Activated CD8-positive, alpha-beta T cell treated with anti-CD3 and anti-CD28 coated beads, Interleukin-2, amount 10 ng/mL, durations not matched to agents 7 days and 5 days (primary cell): ENCODE measurements at regions of chr19 and their contacts with region 1.

Region 1: DNA sequence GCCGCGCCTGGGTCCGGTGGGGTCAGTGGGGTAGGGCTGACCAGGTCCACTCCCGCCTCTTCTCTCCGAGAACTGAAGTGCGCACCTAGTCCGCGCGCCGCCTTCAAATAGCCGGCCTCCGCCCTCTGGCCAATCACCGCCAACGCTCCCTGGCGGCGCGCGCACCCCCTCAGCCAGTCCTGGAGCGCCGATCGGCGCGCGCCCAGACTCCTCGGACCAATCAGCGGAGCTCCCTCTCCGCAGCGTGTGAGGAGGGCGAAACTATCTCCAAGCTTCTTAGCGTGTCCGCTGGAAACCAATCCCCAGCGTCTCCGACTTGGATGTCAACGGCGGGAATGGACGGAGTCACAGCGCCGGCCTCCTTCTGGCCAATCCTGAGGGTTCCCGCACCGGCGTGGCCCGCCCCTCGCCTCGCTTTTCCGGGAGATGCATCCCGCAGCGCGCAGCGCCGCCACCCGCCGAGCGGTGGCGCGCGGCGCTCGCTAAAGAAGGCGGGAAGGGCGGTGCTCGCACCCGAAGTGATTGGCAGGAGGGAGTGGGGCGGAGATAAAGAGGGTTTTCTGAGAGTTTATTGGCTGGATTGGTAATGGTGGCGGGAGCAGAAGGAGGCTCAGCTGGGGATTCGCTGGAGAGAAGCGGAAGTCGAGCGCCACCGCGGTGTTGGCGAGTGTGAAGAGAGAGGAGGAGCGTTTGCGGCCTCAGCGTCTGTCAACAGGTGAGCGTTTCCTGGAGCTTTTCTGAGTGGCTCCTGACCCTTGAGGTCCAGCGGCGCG is at the start of gene ASF1B:
- DNase-seq: peak; percentile 99
- ATAC-seq: peak; percentile 89
- H3K4me3 Mint-ChIP-seq: peak within 1 kb of the TSS; percentile 85
- H3K27ac Mint-ChIP-seq: peak within 1 kb of the TSS; percentile 94
- H3K4me1 Mint-ChIP-seq: peaks cover 48% of the 10 kb centered on the region
- H3K27me3 Mint-ChIP-seq: no peaks in the 10 kb centered on the region
- total RNA-seq, gene ASF1B: 131 TPM

Region 2: DNA sequence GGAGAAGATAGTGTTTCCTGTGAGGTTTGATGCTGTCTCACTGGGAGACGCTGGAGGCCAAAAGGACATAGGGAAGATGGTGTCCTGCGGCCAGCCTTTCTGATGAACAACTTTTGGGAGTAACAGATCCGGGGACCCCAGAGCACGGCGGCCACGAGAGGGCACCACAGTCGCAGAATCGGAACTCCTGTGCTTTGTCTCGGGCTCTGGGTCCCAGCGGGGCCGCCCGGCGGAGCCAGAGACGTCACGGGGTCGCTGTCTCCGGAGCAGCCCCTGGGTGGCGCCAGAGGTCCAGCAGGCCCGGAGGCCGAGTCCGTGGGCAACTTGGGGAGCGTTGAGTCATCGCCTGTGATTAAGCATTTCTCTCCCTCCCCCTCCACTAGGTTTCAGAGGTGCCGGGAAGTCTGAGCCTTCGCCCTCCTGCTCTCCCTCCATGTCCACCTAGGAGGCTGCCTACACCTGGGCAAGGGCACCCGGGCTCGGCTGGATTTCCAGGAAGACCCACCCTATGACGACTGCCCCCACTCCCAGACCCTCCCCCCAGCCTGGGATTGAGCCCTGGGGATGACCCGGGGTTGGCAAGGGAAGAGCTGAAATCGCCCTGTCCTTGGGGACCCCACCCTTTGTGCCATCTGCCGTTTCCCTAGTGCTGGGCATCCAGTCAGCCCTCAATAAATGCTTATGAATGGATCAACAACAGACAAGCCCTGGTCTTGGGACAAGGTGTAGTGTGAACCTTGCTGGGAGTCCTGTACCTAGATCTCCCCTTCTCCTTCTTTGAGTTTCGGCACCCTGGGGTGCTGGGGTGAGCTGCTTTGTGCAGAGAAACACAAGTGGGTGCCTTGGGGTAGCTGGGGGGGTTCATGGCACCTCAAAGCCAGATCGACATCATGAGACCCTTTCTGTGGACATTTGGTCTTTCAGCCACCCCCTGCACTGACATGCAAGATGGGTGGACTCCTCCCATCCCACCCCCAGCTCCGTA is 256.3 kb before region 1 on chr19:
- CTCF ChIA-PET with region 1: interaction called, 29 read pairs
- POLR2A ChIA-PET with region 1: interaction called, 6 read pairs
- DNase-seq: peak; percentile 99
- ATAC-seq: peak; percentile 96
- H3K4me3 Mint-ChIP-seq: peak overlapping the region; percentile 54
- H3K27ac Mint-ChIP-seq: peak overlapping the region; percentile 64
- H3K4me1 Mint-ChIP-seq: peaks cover 45% of the 10 kb centered on the region
- H3K27me3 Mint-ChIP-seq: peaks cover 8% of the 10 kb centered on the region

Region 3: GRCh38 chr19:14091081-14091812 is 45.4 kb before region 1 on chr19:
- CTCF ChIA-PET with region 1: interaction called, 11 read pairs
- POLR2A ChIA-PET with region 1: interaction called, 7 read pairs
- DNase-seq: peak; percentile 65
- ATAC-seq: peak; percentile 78
- H3K4me3 Mint-ChIP-seq: peak overlapping the region; percentile 93
- H3K27ac Mint-ChIP-seq: peak overlapping the region; percentile 96
- H3K4me1 Mint-ChIP-seq: peaks cover 24% of the 10 kb centered on the region
- H3K27me3 Mint-ChIP-seq: no peaks in the 10 kb centered on the region

Region 4: GRCh38 chr19:14147797-14148605 is 11.3 kb after region 1 on chr19:
- CTCF ChIA-PET with region 1: interaction called, 73 read pairs
- POLR2A ChIA-PET with region 1: interaction called, 8 read pairs
- DNase-seq: peak; percentile 67
- ATAC-seq: peak; percentile 57
- H3K4me3 Mint-ChIP-seq: peak overlapping the region; percentile 80
- H3K27ac Mint-ChIP-seq: peak overlapping the region; percentile 99
- H3K4me1 Mint-ChIP-seq: peaks cover 35% of the 10 kb centered on the region
- H3K27me3 Mint-ChIP-seq: no peaks in the 10 kb centered on the region

Region 5: GRCh38 chr19:14347999-14348889 is 211.5 kb after region 1 on chr19:
- CTCF ChIA-PET with region 1: interaction called, 76 read pairs
- POLR2A ChIA-PET with region 1: interaction called, 4 read pairs
- DNase-seq: peak; percentile 74
- ATAC-seq: peak; percentile 73
- H3K4me3 Mint-ChIP-seq: peak overlapping the region; percentile 52
- H3K27ac Mint-ChIP-seq: peak overlapping the region; percentile 39
- H3K4me1 Mint-ChIP-seq: peaks cover 21% of the 10 kb centered on the region
- H3K27me3 Mint-ChIP-seq: no peaks in the 10 kb centered on the region

Region 6: GRCh38 chr19:14405758-14406644 is 269.3 kb after region 1 on chr19:
- CTCF ChIA-PET with region 1: interaction called, 21 read pairs
- POLR2A ChIA-PET with region 1: interaction called, 3 read pairs
- DNase-seq: peak; percentile 91
- ATAC-seq: peak; percentile 54
- H3K4me3 Mint-ChIP-seq: no peak overlapping the region
- H3K27ac Mint-ChIP-seq: peak overlapping the region; percentile 77
- H3K4me1 Mint-ChIP-seq: peaks cover 30% of the 10 kb centered on the region
- H3K27me3 Mint-ChIP-seq: no peaks in the 10 kb centered on the region

Region 7: DNA sequence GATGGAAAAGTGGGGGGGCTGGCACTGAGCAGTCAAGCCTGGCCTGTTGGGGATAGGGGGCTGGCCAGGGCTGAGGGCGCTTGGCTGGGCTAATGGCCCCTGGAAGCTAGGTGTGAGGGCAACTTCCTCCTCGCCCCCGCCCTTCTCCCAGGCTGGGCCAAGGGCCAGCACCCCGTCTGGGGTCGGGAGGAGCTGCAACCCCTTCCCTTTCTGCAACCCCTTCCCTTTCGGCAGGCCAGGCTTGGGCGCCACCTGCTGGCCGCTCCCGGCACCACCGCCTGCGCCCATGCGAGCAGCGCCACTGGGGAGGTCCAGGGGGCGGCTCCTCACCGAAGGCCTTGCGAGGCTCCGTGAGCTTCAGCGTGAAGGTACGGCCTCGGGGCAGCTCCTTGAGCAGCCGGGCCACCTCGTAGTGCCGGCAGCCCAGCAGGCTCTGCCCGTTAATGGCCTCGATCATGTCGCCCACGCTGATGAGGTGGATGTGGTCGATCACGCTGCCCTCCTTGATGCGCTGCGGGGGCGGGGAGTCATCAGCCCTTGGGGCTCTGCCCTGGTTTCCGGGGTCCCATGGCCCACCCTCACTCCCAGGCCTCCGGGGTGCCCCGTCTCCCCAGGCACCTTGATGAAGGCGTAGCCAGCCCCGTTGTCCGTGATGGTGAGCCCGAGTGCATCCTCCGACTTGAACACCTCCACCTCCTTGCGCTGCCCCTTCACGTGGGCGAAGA is 343.4 kb after region 1 on chr19:
- CTCF ChIA-PET with region 1: interaction called, 30 read pairs
- POLR2A ChIA-PET with region 1: interaction called, 5 read pairs
- DNase-seq: peak; percentile 74
- ATAC-seq: peak; percentile 70
- H3K4me3 Mint-ChIP-seq: no peak overlapping the region
- H3K27ac Mint-ChIP-seq: no peak overlapping the region
- H3K4me1 Mint-ChIP-seq: peaks cover 16% of the 10 kb centered on the region
- H3K27me3 Mint-ChIP-seq: no peaks in the 10 kb centered on the region